ENCODE measurements at regions of chr4 and their contacts with region 1.

Region 1: DNA sequence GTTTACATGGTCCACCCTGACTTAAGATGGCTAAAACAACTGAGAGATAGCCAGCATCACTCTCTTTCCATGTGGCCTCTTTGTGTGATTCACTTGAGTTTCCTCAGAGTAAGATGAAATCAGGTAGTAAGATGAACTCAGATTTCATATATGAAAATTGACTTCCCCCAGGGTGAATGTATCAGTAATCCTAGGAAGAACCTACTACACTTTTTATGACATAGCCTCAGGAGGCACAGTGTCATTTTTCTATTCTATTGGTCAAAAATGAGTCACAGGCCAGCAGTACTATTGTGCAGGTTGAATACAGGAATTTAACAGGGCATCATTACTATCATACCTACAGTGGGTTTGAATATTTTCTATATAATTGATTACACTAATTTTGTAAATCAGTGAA is 14.6 kb upstream of the SULT1E1 start:
- DNase-seq: no peak
- H3K4me3 Mint-ChIP-seq: no peak overlapping the region
- H3K27ac Mint-ChIP-seq: no peak overlapping the region
- H3K4me1 Mint-ChIP-seq: peaks cover 5% of the 10 kb centered on the region
- H3K27me3 Mint-ChIP-seq: no peaks in the 10 kb centered on the region

Region 2: GRCh38 chr4:69823481-69824186 is 50.9 kb before region 1 on chr4:
- CTCF ChIA-PET with region 1: interaction called, 12 read pairs
- intact Hi-C with region 1: loop called (anchors 1 kb)
- DNase-seq: peak; percentile 78
- H3K4me3 Mint-ChIP-seq: no peak overlapping the region
- H3K27ac Mint-ChIP-seq: no peak overlapping the region
- H3K4me1 Mint-ChIP-seq: peaks cover 6% of the 10 kb centered on the region
- H3K27me3 Mint-ChIP-seq: no peaks in the 10 kb centered on the region

Region 3: DNA sequence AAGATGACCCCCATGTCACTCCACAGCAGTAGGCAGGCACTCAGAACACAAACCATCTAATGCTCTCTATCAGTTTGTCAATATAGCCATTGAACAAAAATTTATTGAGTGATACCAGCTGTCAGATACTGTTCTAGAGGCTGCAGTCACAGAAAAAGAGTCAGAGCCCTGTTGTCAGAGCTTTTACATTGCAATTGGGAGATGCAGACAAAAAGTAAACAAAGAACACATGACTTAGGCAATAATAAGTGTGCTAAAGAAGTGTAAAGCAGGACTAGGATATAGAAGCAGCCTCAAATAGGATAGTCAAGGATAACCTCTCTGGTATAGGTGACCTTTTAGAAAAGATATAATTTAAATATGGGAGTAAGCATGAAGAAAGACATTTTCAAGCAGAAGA is 184.6 kb after region 1 on chr4:
- CTCF ChIA-PET with region 1: no interaction called
- intact Hi-C with region 1: no loop called
- DNase-seq: no peak
- H3K4me3 Mint-ChIP-seq: no peak overlapping the region
- H3K27ac Mint-ChIP-seq: no peak overlapping the region
- H3K4me1 Mint-ChIP-seq: no peaks in the 10 kb centered on the region
- H3K27me3 Mint-ChIP-seq: no peaks in the 10 kb centered on the region

Measured in activated naive CD4-positive, alpha-beta T cell treated with anti-CD3 and anti-CD28 coated beads for 36 hours (primary cell).